ENCODE measurements at regions of chr6 and their contacts with region 1.

Region 1: DNA sequence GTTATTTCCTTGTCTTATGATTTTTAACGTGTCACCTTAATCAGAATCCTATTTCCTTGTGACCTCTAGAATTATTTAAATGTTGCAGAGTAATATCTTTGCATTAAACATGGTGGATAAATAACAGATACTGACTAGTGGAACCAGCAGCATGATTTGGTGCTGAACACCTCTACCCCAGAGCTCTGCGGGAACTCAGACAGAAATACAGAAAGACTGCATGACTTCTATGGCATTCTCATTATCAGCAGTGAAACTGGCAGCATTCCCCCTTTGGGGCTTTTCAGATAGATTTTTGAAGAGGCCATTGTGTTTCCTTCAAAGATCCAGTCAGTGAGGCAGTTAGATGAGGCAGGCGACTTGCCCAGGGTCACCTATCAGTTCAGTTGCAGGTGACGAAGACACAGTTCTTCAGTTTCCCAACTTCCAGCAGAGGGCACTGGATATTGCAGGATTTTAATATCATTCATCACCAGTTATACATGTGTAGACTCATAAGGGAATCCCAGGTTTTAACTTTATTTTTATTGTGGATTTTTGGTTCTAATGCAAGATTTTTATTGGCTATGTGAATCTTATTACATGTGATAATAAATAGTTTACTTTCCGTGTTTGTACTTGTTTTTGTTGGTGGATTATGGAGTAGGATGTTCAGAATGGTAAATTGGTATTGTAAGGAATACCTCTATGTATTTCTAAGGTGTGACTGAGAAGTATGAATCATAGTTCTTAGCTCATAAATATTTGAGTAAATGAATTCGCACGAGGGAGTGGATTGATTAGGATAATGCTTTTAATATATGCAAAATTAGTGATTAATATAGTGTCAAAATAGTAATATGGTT is 81.3 kb downstream of the AFDN start:
- DNase-seq: no peak
- ATAC-seq: peak; percentile 93
- H3K4me3 ChIP-seq: no peak overlapping the region
- H3K27ac ChIP-seq: no peak overlapping the region
- H3K4me1 ChIP-seq: no peaks in the 10 kb centered on the region
- H3K27me3 ChIP-seq: no peaks in the 10 kb centered on the region
- CTCF ChIP-seq: peak; percentile 85

Region 2: DNA sequence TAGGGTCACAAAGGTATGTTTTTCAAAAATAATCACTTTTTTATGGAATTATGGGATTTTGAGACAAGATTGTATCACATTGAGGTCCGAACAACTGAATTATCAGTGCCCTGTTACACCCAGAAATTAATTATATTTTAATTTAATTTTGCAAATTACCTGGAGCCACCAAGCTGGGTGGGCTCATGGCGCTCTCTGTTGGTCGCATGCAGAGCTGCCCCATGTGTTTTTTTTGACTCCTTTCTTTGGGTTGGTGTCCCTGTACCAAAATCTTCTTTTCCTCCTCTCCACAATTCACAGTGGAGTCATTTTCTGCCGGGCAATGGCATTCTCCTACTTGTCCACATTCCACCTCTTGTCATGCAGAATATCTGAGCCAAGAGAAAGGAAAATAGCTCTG is 209.9 kb after region 1 on chr6:
- CTCF ChIA-PET with region 1: interaction called, 5 read pairs
- POLR2A ChIA-PET with region 1: no interaction called
- in situ Hi-C with region 1: no loop called
- intact Hi-C with region 1: loop called (anchors 5 kb)
- DNase-seq: no peak
- ATAC-seq: no peak
- H3K4me3 ChIP-seq: no peak overlapping the region
- H3K27ac ChIP-seq: no peak overlapping the region
- H3K4me1 ChIP-seq: no peaks in the 10 kb centered on the region
- H3K27me3 ChIP-seq: no peaks in the 10 kb centered on the region
- CTCF ChIP-seq: peak; percentile 87

Region 3: DNA sequence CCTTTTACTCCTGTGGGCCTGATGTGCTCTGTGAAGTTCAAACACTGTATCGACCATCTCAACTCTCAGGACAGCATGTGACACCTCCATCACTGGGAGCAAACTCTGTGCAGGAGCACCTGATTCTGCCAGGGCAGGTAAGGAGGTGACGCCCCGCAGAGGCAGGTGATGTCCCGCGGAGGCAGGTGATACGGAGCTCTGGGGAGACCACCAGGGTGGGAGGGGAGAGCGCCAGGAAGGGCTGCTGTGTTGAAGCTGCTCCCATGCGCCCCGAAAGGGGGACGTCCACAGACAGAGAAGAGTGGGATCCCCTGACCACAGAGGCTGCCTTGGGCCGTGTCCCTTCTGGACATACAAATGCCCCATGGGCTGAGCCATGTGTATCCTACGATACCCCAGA is 353.2 kb after region 1 on chr6:
- CTCF ChIA-PET with region 1: no interaction called
- POLR2A ChIA-PET with region 1: no interaction called
- in situ Hi-C with region 1: no loop called
- intact Hi-C with region 1: no loop called
- DNase-seq: no peak
- ATAC-seq: no peak
- H3K4me3 ChIP-seq: no peak overlapping the region
- H3K27ac ChIP-seq: no peak overlapping the region
- H3K4me1 ChIP-seq: no peaks in the 10 kb centered on the region
- H3K27me3 ChIP-seq: no peaks in the 10 kb centered on the region
- CTCF ChIP-seq: no peak